ENCODE measurements at regions of chr7 and their contacts with region 1.

Region 1: DNA sequence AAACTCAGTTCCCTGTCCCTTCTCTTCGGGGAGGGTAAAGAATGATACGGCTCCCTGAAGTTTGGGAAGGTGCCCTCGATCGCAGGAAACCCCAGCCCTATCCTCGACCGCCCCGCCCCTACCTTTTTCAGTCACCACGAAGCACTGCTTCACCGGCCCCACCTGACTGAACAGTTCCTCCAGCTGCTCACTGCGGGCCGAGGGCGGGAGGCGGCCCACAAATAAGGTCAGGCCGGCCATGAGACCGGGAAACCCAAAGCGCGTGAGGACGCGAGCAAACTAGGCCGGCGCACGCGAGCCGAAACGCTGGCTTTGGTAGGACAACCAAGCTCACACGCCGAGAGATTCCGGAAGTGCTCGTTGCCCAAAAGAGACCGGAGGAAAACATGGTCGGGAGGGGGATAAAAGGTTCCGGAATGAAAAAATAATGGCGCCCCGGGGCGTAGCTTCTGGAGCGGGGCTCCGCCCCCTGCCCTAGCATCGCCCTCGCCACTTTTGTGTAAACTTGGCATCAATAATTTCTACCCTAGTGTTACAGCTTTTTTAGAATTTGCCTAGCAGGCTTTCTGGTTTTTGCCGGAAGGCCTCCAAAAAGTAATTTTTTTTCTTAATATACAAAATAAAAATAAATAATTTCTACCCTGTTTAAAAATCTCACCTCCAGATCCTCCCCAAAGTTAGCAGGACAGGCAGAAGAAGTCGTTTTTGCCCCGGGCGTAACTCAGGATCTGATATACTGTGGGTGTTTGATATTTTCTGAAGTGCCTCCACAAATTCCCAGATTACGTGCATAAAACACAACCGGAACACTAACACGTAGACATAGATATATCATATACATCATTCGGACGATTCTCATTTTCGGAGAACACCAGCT is at the start of gene RBM28:
- DNase-seq: peak; percentile 73 to 94 (median 81)
- ATAC-seq: peak; percentile 94
- H3K4me3 ChIP-seq: peak within 1 kb of the TSS; percentile 73
- H3K4me3 Mint-ChIP-seq: peak within 1 kb of the TSS; percentile 97
- H3K27ac ChIP-seq: peak within 1 kb of the TSS; percentile 75 to 79
- H3K27ac Mint-ChIP-seq: peak within 1 kb of the TSS; percentile 91
- H3K4me1 ChIP-seq: peaks cover 20% of the 10 kb centered on the region
- H3K4me1 Mint-ChIP-seq: peaks cover 48% of the 10 kb centered on the region
- H3K27me3 ChIP-seq: no peaks in the 10 kb centered on the region
- H3K27me3 Mint-ChIP-seq: peaks cover 10% of the 10 kb centered on the region
- CTCF ChIP-seq: no peak
- total RNA-seq, gene RBM28: 10.1 to 10.5 TPM

Region 2: DNA sequence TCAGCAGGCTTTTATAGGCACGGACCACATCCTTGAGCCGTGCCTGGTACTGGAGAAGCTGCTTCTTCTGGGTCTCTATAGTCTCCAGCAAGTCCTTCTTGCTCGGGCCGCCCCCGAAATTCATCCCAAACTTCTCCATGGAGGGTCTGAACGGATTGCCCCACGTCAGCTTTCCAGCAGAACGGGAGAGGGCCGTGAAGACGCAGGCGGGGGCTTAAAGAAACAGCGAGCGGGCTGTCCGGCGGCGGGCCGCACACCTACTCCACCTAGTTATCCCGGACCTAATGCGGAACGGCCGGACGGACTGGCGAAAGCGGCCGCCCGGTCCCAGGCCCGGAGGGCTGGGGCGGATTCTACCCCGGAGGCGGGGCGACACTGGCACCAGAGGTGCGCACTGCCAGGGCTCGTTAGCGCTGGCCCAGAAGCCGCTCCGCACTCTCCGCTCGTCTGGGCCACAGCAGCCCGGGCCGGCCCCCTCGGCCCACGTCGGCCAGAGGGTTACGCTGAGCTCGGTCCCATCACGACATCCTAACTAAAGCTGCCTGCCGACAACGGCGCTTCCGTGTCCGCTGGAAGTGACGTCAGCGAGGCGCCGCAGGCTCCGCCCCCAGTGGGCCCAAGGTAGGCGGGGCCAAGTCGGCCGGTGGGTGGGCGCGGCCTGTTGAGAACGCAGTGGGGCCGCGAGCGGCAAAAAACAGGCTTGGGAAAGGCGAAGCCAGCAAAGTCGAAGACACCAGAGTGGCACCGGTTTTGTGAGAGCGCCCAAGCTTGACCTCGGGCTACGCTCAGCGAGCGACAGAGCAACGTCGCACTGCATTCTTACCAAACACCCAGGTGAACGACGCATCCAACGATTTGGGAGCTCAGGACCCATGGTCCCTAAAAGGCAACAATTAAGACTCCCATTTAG is 758.5 kb before region 1 on chr7 and contains the start of gene GCC1:
- CTCF ChIA-PET with region 1: no interaction called
- POLR2A ChIA-PET with region 1: no interaction called
- intact Hi-C with region 1: loop called in 1 of 2 experiments (anchors 5 kb)
- DNase-seq: peak; percentile 87 to 97 (median 93)
- ATAC-seq: peak; percentile 80
- H3K4me3 ChIP-seq: peak within 1 kb of the TSS; percentile 90
- H3K4me3 Mint-ChIP-seq: peak within 1 kb of the TSS; percentile 96
- H3K27ac ChIP-seq: peak within 1 kb of the TSS; percentile 71 to 72
- H3K27ac Mint-ChIP-seq: peak within 1 kb of the TSS; percentile 92
- H3K4me1 ChIP-seq: peaks cover 73% of the 10 kb centered on the region
- H3K4me1 Mint-ChIP-seq: peaks cover 88% of the 10 kb centered on the region
- H3K27me3 ChIP-seq: no peaks in the 10 kb centered on the region
- H3K27me3 Mint-ChIP-seq: no peaks in the 10 kb centered on the region
- CTCF ChIP-seq: no peak
- total RNA-seq, gene GCC1: 29.8 to 30.6 TPM

Region 3: DNA sequence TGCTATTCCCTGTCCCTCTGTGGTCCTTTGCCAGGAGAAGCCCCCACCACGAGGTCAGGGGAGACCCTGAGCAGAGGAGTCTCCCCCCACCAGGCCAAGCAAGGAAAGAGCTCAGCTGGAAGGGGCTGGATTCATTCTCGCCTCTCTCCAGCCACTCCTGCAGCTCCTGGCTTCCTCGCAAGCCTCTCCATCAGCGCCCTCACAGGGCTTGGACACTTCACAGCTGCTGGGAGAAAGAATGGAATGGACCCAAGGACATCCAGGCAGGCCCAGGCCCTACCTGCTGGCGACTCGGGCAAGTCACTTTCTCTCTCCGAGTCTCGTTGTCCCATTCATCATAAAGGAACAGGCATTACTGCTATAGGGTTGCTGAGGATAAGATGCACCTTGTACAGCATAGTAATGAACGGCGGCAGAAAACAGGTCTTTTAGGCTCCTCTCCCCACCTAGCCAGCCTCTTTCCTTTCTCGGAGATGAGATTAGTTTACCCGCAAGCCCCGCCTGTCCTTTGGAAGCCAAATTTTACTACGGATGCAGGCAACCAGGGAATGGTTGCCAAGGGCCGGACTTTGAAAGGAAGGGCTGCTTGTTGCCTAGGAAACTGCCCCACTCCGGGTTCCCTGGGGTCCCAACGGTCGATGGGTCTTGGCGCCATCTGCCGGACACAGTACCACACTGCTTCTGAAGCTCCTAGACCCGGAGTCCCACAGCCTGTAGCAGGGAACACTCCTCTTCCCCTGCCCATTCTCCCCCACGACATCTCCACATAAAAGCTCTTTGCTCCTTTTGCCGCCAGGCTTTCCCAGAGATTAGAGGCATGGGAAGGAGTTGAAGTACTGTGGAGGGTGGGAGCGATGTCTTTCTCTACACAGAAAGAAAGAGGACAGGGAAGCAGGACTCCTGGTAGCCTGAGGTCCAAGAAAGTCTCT is 43.7 kb after region 1 on chr7:
- CTCF ChIA-PET with region 1: interaction called, 35 read pairs
- POLR2A ChIA-PET with region 1: interaction called, 14 read pairs
- intact Hi-C with region 1: loop called (anchors 1 kb)
- DNase-seq: peak; percentile 42 to 80 (median 58)
- ATAC-seq: peak; percentile 93
- H3K4me3 ChIP-seq: no peak overlapping the region
- H3K4me3 Mint-ChIP-seq: no peak overlapping the region
- H3K27ac ChIP-seq: no peak overlapping the region
- H3K27ac Mint-ChIP-seq: no peak overlapping the region
- H3K4me1 ChIP-seq: peaks cover 5% of the 10 kb centered on the region
- H3K4me1 Mint-ChIP-seq: no peaks in the 10 kb centered on the region
- H3K27me3 ChIP-seq: peaks cover 0 to 5% of the 10 kb centered on the region in 2 experiments
- H3K27me3 Mint-ChIP-seq: no peaks in the 10 kb centered on the region
- CTCF ChIP-seq: peak; percentile 82

Region 4: DNA sequence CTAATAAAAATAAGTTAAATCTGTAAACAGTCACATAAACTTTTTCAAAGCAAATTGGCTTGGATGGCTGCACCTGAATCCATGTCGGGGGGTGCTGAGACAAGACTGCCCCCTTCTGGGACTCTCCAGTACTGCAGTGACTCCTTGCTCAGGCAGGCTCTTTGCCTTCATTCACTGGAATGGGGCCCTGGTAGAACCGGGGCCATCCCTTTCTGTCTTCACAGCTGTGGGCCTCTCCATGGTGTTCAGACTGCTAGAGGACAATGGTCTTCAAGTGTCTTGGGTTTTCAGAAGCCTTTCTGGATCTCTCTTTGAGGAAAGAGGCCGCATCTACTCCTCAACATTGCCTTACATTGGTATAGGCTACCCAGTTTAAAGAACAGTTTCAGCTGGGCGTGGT is 82.1 kb after region 1 on chr7:
- CTCF ChIA-PET with region 1: interaction called, 9 read pairs
- POLR2A ChIA-PET with region 1: interaction called, 5 read pairs
- intact Hi-C with region 1: loop called (anchors 2 to 10 kb)
- DNase-seq: peak; percentile 62 to 88 (median 74)
- ATAC-seq: peak; percentile 92
- H3K4me3 ChIP-seq: no peak overlapping the region
- H3K4me3 Mint-ChIP-seq: no peak overlapping the region
- H3K27ac ChIP-seq: no peak overlapping the region
- H3K27ac Mint-ChIP-seq: no peak overlapping the region
- H3K4me1 ChIP-seq: peaks cover 8% of the 10 kb centered on the region
- H3K4me1 Mint-ChIP-seq: no peaks in the 10 kb centered on the region
- H3K27me3 ChIP-seq: peaks cover 0 to 5% of the 10 kb centered on the region in 2 experiments
- H3K27me3 Mint-ChIP-seq: peaks cover 6% of the 10 kb centered on the region
- CTCF ChIP-seq: peak; percentile 94

Region 5: DNA sequence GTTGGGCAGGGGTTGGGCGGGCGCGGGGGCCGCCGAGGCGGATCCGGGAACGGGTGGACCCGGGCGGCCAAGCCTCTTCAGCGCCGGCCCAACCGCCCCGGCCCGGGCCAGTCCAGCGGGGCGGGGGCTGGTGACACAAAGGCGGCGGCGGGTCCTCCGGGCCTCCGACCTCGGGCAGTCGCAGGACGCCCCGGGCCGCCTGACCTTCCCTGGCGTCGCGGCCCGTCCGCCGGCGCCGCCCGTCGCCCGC is 187.0 kb after region 1 on chr7:
- CTCF ChIA-PET with region 1: no interaction called
- POLR2A ChIA-PET with region 1: no interaction called
- intact Hi-C with region 1: loop called in 1 of 2 experiments (anchors 10 kb)
- DNase-seq: peak in 1 of 14 experiments; percentile 22
- ATAC-seq: peak; percentile 14
- H3K4me3 ChIP-seq: peak overlapping the region; percentile 59
- H3K4me3 Mint-ChIP-seq: no peak overlapping the region
- H3K27ac ChIP-seq: peak overlapping the region in 1 of 2 donors; percentile 35
- H3K27ac Mint-ChIP-seq: peak overlapping the region; percentile 70
- H3K4me1 ChIP-seq: peaks cover 13% of the 10 kb centered on the region
- H3K4me1 Mint-ChIP-seq: peaks cover 37% of the 10 kb centered on the region
- H3K27me3 ChIP-seq: no peaks in the 10 kb centered on the region
- H3K27me3 Mint-ChIP-seq: no peaks in the 10 kb centered on the region
- CTCF ChIP-seq: no peak

Region 6: DNA sequence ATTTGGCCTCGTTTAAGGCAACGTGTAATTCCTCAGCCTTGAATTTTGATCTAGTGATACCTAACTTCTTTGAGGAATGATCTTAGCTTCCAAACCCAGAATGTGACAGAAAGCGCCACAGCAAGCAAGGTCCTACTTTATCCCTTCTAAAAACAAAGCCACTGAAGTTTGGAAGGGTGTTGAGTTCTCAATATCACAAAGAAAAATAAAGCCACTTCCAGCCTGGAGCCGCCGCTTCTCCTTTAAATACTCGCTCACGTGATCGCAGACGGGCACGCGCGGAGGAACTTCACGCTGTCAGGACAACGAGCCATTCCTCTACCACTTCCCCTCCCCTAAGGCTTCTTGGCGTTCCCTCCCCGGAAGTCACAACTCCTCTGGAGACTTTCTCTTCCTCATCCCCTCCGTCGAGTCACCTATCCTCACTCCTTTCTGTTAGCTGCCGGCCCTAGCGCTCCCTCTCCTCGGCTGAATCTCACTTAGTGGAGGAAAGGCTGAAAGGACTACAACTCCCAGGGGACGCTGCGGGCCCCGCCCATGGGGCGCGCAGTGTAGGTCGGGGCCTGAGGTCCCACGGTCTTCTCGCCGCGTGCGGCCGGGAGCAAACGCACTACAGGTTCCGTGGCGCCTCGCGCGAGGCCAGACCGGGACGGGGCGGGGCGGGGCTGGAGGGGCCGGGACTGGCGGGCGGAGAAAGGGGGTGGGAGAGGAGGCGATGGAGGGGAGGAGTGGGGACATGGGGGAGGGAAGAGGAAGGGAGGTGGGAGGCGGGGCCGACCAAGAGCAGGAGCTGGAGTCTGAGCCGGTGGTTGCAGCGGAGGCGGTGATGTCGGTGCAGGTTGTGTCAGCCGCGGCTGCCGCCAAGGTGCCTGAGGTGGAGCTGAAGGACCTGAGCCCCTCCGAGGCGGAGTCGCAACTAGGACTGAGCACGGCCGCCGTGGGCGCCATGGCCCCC is 880.7 kb after region 1 on chr7 and contains the start of gene AHCYL2:
- CTCF ChIA-PET with region 1: no interaction called
- POLR2A ChIA-PET with region 1: no interaction called
- intact Hi-C with region 1: loop called in 1 of 2 experiments (anchors 5 kb)
- DNase-seq: peak; percentile 96 to 99 (median 98)
- ATAC-seq: peak; percentile 89
- H3K4me3 ChIP-seq: peak within 1 kb of the TSS; percentile 91
- H3K4me3 Mint-ChIP-seq: peak within 1 kb of the TSS; percentile 96
- H3K27ac ChIP-seq: peak within 1 kb of the TSS; percentile 72 to 97
- H3K27ac Mint-ChIP-seq: peak within 1 kb of the TSS; percentile 89
- H3K4me1 ChIP-seq: peaks cover 25% of the 10 kb centered on the region
- H3K4me1 Mint-ChIP-seq: peaks cover 56% of the 10 kb centered on the region
- H3K27me3 ChIP-seq: no peaks in the 10 kb centered on the region
- H3K27me3 Mint-ChIP-seq: no peaks in the 10 kb centered on the region
- CTCF ChIP-seq: no peak
- total RNA-seq, gene AHCYL2: 5.8 to 6.0 TPM